HEK293 (cell line): ENCODE measurements at regions of chr6 and their contacts with region 1.

Region 1: GRCh38 chr6:3157131-3157927 is at the start of gene TUBB2A:
- H3K4me3 ChIP-seq: peak within 1 kb of the TSS; percentile 71
- H3K27ac ChIP-seq: peak within 1 kb of the TSS; percentile 71; the same call in 1 of the 2 replicates
- H3K4me1 ChIP-seq: peaks cover 9% of the 10 kb centered on the region
- CTCF ChIP-seq: no peak; the same call in 1 of the 2 replicates

Region 2: DNA sequence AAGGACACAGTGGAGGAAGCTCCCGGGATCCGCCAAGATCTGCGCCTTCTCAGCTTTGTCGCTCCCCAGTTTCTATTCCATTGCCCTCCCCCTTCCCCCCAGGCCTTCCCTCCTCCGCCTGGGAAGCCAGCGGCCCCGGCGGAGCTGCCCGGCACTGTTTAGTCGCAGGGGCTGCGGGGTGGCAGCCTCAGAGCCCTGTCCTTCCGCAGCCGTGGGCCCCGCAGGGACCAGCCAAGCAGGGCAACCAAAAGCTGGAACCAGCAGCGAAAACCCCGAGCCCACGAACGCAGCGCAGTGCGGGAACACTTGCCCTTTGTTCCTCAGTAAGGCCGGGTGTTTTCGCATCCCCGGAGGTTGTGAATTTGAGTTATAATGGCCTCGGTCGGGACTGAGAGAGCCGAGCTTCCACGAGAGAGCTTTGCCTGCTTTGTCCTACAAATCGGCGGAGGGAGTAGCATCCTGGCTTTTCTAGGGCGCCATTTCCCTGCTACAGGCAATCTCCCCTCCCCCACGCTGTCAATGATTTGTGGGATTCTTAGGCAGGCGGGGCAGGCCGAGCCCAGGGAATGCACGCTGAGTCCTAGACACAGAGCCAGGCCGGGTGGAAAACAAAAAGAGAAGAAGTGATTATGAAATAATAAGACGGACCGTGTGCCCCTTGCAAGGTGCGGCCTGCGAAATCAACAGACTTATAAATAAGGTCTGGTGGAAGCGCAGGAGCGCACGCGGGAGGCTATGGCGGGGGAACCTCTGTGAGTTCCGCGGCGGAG is 74.1 kb after region 1 on chr6:
- CTCF ChIA-PET with region 1: interaction called, 3 read pairs
- POLR2A ChIA-PET with region 1: interaction called, 17 read pairs
- H3K4me3 ChIP-seq: peak overlapping the region; percentile 71
- H3K27ac ChIP-seq: peak overlapping the region; percentile 94
- H3K4me1 ChIP-seq: peaks cover 7% of the 10 kb centered on the region; the same call in 1 of the 2 replicates
- CTCF ChIP-seq: no peak

Region 3: GRCh38 chr6:3258720-3259490 is 101.6 kb after region 1 on chr6 and contains the start of gene PSMG4:
- CTCF ChIA-PET with region 1: interaction called, 3 read pairs
- POLR2A ChIA-PET with region 1: interaction called, 14 read pairs
- H3K4me3 ChIP-seq: peak within 1 kb of the TSS; percentile 92
- H3K27ac ChIP-seq: peak within 1 kb of the TSS; percentile 67
- H3K4me1 ChIP-seq: peaks cover 10% of the 10 kb centered on the region; the same call in 1 of the 2 replicates
- CTCF ChIP-seq: 0 out of 2 replicates have a peak, but pooled peaks have one; percentile 12